Left colon (tissue), 2 donors: ENCODE measurements at regions of chr3 and their contacts with region 1.

Region 1: DNA sequence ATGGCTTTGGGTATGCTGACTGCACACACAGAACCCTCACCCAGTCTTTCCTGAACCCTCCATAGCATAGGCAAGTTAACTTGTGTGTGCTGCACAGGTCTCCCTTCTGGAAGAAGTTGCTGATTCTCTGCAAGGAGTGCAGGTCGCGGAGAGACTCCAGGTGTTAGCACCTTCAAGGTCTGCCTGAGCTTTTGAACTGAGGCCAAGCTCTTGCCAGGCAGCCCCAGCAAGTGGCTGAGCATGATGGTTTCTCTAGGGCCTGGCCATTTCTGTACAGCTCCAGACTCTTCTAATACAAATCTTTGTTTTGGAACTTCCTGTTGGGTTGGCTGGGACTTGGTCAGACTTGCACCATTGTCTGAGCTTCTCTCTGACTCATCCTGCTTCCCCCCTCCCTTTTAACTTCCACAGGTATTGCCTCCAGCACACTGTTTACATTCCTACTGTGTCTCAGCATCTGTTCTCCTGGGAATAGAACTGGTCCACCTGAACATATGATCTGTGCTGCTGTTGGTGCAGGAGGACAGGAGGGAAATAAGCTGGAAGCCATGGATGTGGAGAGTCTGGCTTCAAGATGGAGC is 53.3 kb downstream of the KY start:
- DNase-seq: no peak
- ATAC-seq: no peak

Region 2: GRCh38 chr3:134180761-134181160 is 416.7 kb before region 1 on chr3:
- intact Hi-C with region 1: no loop called
- DNase-seq: no peak
- ATAC-seq: no peak

Region 3: GRCh38 chr3:135895106-135895733 is 1297.7 kb after region 1 on chr3:
- intact Hi-C with region 1: loop called in 1 of 2 experiments (anchors 10 kb)
- DNase-seq: peak; percentile 33 to 85
- ATAC-seq: peak; percentile 71